SK-N-SH (cell line): ENCODE measurements at regions of chr15 and their contacts with region 1.

Region 1: DNA sequence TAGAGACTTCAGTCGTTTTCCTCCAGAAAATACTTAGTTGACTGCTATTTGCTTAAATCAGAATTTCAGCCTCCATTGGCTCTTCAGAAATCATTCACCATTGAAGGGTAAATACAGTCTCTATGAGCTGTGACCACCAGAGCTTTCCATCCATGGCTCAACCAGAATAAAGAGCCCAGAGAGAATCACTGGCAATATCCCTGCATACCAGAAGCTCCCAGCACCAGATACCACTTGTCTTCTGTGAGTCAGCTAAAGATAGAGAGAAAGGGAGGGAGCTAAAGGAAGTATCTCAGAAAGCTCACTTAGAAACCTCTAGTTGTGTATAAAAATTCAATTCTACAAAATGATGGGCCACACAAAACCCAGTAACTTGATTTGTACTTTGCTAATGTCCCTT is 115.2 kb upstream of the TMCO5A start:
- DNase-seq: no peak
- H3K4me3 ChIP-seq: no peak overlapping the region
- H3K27ac ChIP-seq: peak overlapping the region in 1 of 2 experiments; percentile 100; a peak in 2 of 4 replicates
- H3K4me1 ChIP-seq: peaks cover 3 to 43% of the 10 kb centered on the region in 2 experiments; a peak in 2 of 4 replicates
- H3K27me3 ChIP-seq: no peaks in the 10 kb centered on the region
- CTCF ChIP-seq: no peak
- EP300 ChIP-seq: no peak
- RAD21 ChIP-seq: peak; percentile 4; the same call in 1 of the 2 replicates

Region 2: GRCh38 chr15:37872661-37873060 is 53.5 kb after region 1 on chr15:
- CTCF ChIA-PET with region 1: interaction called, 38 read pairs
- POLR2A ChIA-PET with region 1: interaction called, 11 read pairs
- DNase-seq: no peak
- H3K4me3 ChIP-seq: peak overlapping the region; percentile 26 to 46
- H3K27ac ChIP-seq: peak overlapping the region; percentile 36 to 99; a peak in 3 of 4 replicates
- H3K4me1 ChIP-seq: peaks cover 6 to 46% of the 10 kb centered on the region in 2 experiments; a peak in 3 of 4 replicates
- H3K27me3 ChIP-seq: no peaks in the 10 kb centered on the region
- CTCF ChIP-seq: no peak
- EP300 ChIP-seq: 0 out of 4 replicates have a peak, but pooled peaks of 1 of the 2 experiments have one; percentile 35
- RAD21 ChIP-seq: no peak; the same call in 1 of the 2 replicates